ENCODE measurements at regions of chr16 and their contacts with region 1.

Region 1: DNA sequence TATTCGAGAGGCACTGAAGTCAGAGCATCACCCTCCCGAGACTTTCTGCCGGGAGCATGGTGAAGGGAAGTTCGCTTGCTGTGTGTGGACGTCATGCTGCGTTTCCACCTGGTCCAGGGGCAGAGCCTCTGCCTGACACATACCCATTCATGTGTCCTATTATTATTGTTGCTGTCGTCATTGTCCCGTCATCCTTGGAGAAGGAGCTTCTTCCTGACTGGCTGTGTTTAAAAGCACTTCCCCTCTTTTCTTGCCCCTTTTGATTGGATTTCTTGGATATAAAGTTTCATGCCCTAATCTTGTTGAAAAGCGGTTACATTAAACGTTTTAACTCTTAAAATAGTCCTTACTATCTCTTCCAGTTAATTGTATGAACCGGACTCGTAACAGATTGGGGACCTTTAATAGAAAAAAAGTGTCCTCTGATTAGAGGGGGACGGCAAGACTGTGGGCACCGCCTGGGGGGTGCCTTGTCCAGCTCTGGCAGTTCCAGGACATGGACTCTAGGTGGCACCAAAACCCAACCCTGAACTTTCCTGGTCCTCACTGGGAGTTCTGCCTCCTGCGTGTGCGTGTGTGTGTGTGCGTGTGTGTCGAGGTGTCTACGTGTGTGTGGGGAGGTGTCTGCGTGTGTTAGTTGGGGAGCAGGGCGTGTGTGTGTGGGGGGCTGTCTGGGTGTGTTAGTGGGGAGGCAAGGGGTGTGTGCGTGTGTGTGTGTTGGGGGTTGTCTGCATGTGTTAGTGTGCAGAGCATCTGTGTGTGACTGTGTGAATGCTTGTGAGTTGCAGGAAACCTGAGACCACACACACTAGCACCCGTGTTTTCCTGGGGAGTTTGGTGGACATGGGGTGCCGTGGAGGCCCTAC is 133.3 kb upstream of the CIBAR2 start:
- H3K4me3 ChIP-seq: no peak overlapping the region
- H3K27ac ChIP-seq: no peak overlapping the region
- H3K4me1 ChIP-seq: peaks cover 5% of the 10 kb centered on the region; the same call in 1 of the 2 replicates
- CTCF ChIP-seq: peak; percentile 96

Region 2: DNA sequence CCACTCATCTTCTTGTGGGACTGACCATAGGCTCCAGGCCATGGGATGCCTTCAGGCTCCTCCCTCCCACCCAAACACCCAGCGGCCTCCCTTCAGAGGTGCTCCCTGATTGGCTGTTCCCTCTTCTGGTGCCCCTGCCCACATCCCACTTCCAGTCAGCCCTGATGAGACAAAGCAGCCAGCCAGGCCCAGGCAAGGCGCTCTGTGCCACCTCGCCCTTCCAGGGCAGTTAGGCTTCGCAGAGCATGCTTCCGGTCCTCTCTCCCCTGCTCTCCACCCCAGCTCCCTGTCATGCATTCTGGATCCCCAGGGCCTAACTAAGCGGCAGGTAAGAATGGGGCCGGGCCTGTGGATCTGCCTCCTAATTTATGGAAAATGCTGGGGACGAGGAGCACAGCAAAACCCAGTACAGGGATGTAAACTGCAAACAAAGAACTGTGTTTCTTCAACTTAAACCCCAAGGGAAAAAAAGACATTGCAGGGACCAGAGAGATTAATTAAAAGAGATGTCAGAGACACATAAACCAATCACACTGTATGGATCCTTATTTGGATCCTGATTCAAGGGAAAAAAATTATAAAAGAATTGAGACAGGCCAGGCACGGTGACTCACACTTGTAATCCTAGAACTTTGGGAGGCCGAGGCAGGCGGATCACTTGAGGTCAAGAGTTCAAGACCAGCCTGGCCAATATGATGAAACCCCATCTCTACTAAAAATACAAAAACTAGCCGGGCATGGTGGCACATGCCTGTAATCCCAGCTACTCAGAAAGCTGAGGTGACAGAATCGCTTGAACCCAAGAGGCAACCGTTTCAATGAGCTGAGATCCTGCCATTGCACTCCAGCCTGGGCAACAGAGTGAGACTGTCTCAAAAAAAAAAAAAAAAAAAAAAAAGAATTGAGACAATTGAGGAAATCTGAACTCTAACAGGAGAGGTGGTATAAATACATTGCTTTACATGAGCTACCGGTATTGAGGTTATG is 260.2 kb before region 1 on chr16:
- CTCF ChIA-PET with region 1: no interaction called
- POLR2A ChIA-PET with region 1: no interaction called
- H3K4me3 ChIP-seq: no peak overlapping the region
- H3K27ac ChIP-seq: no peak overlapping the region
- H3K4me1 ChIP-seq: no peaks in the 10 kb centered on the region
- CTCF ChIP-seq: no peak

Region 3: DNA sequence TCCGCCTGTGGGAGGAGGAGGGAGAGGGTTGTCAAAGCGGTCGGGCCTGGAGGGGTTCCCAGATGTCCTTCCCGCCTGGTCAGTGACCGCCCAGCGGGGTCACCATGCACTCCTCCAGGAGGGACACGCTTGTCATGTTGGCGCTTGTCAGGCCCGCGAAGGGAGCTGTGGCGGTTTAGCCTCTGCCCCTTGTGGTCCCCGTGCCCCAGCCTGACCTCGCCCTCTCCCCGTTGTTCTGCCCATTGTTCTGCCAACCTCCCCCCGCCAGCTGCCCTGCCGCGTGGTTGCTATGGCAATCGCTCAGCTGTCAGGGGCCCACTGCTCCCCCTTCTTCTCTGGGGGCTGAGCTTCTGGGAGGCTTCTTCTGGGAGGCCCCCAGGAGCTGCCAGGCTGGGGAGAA is 13.1 kb after region 1 on chr16:
- CTCF ChIA-PET with region 1: interaction called, 19 read pairs
- POLR2A ChIA-PET with region 1: no interaction called
- H3K4me3 ChIP-seq: no peak overlapping the region
- H3K27ac ChIP-seq: no peak overlapping the region
- H3K4me1 ChIP-seq: no peaks in the 10 kb centered on the region
- CTCF ChIP-seq: no peak